PC-3 (cell line): ENCODE measurements at regions of chr14 and their contacts with region 1.

Region 1: GRCh38 chr14:58107947-58108552 is 44.0 kb downstream of the ARMH4 start:
- DNase-seq: peak; percentile 93
- ATAC-seq: 0 out of 2 replicates have a peak, but pooled peaks have one; percentile 6
- H3K4me3 ChIP-seq: no peak overlapping the region
- H3K27ac ChIP-seq: no peak overlapping the region
- H3K4me1 ChIP-seq: peaks cover 45% of the 10 kb centered on the region
- H3K27me3 ChIP-seq: peaks cover 16% of the 10 kb centered on the region; the same call in 1 of the 2 replicates
- CTCF ChIP-seq: peak; percentile 99

Region 2: DNA sequence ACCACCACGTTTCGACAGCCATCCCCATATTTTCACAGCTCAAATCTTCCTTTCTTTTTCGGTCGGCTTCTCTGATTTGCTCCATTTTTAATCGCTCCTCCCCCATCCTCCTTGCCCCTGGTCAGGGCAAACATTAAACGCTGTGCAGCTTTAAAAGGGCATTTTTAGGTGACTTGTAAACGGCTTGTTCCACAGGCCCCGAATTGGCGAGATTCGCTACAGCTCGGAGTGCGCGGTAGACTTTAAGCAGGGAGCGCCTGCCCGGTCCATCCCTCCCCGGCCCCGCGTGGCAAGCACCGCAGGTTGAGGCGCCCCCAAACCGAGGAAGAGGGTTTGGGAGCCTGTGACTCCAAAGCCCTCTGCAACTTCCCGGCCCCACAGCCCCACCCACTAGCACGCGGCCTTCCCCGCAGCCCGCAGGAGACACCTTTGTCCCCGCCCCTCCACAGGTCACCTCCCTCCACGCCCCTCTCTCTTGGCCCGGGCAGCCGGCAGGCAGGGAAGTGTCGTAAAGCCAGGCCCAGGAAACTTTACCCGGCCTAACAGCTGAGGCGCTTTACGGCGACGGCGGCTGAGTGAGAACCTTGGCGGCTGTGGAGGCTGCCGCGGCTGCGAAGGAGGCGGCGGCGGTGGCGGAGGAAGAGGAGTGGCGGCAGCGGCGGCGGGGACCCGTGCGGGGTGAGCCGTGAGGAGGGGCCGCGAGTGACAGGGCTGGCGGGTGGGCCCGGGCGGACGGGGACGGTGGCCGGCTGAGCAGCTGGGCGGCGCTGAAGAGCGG is 717.8 kb before region 1 on chr14 and contains the start of gene NAA30:
- CTCF ChIA-PET with region 1: no interaction called
- POLR2A ChIA-PET with region 1: no interaction called
- intact Hi-C with region 1: no loop called
- DNase-seq: peak; percentile 100
- ATAC-seq: peak; percentile 83
- H3K4me3 ChIP-seq: peak within 1 kb of the TSS; percentile 77
- H3K27ac ChIP-seq: peak within 1 kb of the TSS; percentile 68
- H3K4me1 ChIP-seq: peaks cover 31% of the 10 kb centered on the region
- H3K27me3 ChIP-seq: no peaks in the 10 kb centered on the region
- CTCF ChIP-seq: no peak; the same call in 1 of the 2 replicates
- total RNA-seq, gene NAA30: 23.2 and 31.2 TPM in 2 replicates

Region 3: GRCh38 chr14:57435923-57436322 is 672.1 kb before region 1 on chr14:
- CTCF ChIA-PET with region 1: no interaction called
- POLR2A ChIA-PET with region 1: no interaction called
- intact Hi-C with region 1: no loop called
- DNase-seq: no peak
- ATAC-seq: no peak
- H3K4me3 ChIP-seq: no peak overlapping the region
- H3K27ac ChIP-seq: no peak overlapping the region
- H3K4me1 ChIP-seq: no peaks in the 10 kb centered on the region
- H3K27me3 ChIP-seq: peaks cover 24% of the 10 kb centered on the region
- CTCF ChIP-seq: peak; percentile 53

Region 4: DNA sequence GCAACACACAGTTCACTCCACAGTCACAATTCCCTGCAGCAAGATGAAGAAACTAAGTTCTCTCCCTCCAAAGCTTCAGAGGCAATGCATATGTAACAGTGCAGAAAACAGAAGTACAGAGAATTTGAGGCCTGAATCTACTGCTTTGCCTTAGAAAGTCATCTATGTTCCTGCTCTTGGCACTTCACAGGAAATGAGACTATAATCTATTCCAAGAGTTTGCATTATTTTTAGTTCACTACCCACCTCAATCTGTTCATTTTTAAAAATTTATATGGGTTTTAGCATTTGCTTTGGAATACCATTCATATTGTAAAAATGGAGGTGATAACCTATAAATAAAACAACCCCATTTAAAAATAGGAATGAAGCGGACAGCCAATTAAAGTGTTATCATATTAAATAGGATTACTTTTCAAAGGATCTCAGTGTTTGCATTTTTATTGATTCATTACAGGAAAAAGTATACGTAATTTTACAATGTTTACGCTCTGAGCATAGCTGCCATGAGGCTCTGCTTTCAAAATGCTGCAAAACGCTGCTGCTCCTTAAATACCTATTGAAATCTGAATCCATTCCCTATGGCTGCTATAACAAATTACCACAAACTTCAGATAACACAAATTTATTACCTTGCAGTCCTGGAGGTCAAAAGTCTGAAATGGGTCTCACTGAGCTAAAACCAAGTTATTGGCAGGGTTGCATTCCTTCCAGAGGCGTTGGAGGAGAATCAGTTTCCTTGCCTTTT is 16.0 kb before region 1 on chr14:
- CTCF ChIA-PET with region 1: no interaction called
- POLR2A ChIA-PET with region 1: interaction called, 3 read pairs
- intact Hi-C with region 1: loop called (anchors 1 kb)
- DNase-seq: peak; percentile 92
- ATAC-seq: peak; percentile 89
- H3K4me3 ChIP-seq: no peak overlapping the region
- H3K27ac ChIP-seq: peak overlapping the region; percentile 49
- H3K4me1 ChIP-seq: peaks cover 14% of the 10 kb centered on the region
- H3K27me3 ChIP-seq: peaks cover 15% of the 10 kb centered on the region; the same call in 1 of the 2 replicates
- CTCF ChIP-seq: no peak

Region 5: DNA sequence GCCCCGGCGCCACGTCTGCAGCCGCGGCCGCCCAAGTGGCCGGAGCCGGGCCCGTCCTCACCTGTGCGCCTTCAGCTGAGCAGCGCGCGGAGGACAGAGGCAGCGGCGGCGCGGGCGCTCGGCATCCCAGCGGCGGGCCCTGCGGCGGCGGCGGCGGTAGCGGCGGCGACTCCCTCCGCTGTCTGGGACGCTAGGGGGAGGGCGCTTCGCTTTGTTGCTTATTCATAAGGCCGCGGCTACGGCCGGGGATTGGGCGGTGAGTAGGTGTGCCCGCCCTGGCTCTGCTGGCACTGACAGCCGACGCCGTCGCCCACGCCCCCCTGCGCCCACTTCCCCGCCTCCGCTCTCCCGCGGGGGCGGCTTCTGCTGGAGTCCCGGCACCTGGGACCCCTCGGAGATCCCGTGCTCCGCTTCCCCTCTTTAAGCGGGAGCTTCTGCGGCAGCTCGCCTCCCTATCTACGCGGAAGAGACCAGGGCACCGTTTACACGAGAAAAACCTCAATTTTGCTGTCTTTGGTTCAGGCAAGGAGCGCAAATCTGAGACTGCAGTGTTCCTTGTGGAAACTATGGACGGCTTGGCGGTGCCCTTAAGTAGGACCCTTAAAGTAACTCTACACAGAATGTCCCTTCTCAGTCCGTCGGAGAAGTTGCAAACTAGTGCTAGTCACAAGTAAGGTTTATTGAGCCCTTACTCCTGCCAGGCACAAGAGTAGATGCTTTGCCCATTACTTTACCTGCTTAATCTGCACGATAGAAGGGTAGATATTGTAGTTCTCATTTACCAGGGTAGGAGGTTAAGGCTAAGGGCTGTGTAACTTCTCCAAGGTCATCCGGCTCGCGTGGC is 44.2 kb after region 1 on chr14 and contains the start of gene ARMH4:
- CTCF ChIA-PET with region 1: no interaction called
- POLR2A ChIA-PET with region 1: no interaction called
- intact Hi-C with region 1: loop called (anchors 1 kb)
- DNase-seq: peak; percentile 98
- ATAC-seq: peak; percentile 95
- H3K4me3 ChIP-seq: peak within 1 kb of the TSS; percentile 73
- H3K27ac ChIP-seq: no peak within 1 kb of the TSS
- H3K4me1 ChIP-seq: peaks cover 12% of the 10 kb centered on the region
- H3K27me3 ChIP-seq: peaks cover 47% of the 10 kb centered on the region
- CTCF ChIP-seq: no peak; the same call in 1 of the 2 replicates
- total RNA-seq, gene ARMH4: 2.6 and 3.3 TPM in 2 replicates

Region 6: GRCh38 chr14:58199726-58200479 is 91.9 kb after region 1 on chr14 and contains the start of gene ACTR10:
- CTCF ChIA-PET with region 1: no interaction called
- POLR2A ChIA-PET with region 1: interaction called, 3 read pairs
- intact Hi-C with region 1: loop called (anchors 1 kb)
- DNase-seq: peak; percentile 99
- ATAC-seq: peak; percentile 94
- H3K4me3 ChIP-seq: peak within 1 kb of the TSS; percentile 88
- H3K27ac ChIP-seq: peak within 1 kb of the TSS; percentile 55
- H3K4me1 ChIP-seq: peaks cover 15% of the 10 kb centered on the region; the same call in 1 of the 2 replicates
- H3K27me3 ChIP-seq: peaks cover 10% of the 10 kb centered on the region; the same call in 1 of the 2 replicates
- CTCF ChIP-seq: no peak
- total RNA-seq, gene ACTR10: 118 and 126 TPM in 2 replicates

Region 7: DNA sequence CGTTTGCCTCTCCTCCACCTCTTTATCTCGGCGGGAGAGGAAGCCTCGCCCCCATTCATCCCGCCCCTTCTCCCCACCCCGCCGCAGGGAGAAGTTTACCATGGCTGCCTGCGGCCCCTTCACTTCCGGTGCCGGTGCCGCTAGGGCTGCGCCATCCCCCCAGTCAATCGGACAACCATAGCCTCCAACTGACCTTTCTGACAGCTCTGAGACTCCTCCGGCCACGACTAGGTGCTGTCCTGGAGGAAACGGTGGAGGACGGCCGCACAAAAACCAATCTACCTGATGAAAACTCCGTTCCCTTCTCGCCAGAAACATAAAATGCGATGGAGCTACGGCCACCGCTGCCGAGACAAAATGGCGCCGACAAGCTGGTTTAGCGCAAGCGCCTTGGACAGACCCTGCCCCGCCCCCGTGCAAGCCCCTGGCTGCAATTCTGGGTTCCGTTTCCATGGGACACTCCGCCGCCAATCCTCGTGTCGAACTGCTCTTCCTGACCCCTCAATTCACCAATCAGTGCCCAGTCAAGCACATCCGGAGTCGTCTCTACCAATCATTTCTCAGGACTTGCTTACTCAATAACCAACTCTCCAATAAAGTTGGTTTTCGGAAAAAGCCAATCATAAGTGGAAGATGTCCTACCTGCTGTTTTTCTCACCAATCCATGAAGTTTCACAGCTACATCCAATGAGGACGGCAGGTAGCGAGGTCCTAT is 189.9 kb after region 1 on chr14:
- CTCF ChIA-PET with region 1: no interaction called
- POLR2A ChIA-PET with region 1: interaction called, 8 read pairs
- intact Hi-C with region 1: loop called (anchors 1 kb)
- DNase-seq: peak; percentile 100
- ATAC-seq: peak; percentile 87
- H3K4me3 ChIP-seq: peak overlapping the region; percentile 78
- H3K27ac ChIP-seq: peak overlapping the region; percentile 78
- H3K4me1 ChIP-seq: peaks cover 18% of the 10 kb centered on the region
- H3K27me3 ChIP-seq: no peaks in the 10 kb centered on the region
- CTCF ChIP-seq: 0 out of 2 replicates have a peak, but pooled peaks have one; percentile 24

Region 8: DNA sequence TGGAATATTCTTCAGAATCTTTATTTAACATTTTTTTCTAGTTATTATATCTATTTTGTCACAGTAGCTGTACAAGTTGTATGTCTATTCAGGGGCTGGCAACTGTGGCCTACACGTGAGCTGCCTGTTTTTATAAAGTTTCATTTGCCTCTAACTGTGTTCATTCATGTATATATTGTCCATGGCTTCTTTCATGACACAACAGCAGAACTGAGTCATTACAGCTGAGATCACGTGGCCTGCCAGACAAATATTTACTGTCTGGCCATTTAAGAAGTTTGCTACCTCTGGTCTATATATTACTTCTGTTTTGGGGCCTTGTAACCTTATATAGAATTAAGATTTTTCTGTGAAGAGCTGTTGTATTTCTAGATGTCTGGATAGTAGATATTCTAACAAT is 357.4 kb after region 1 on chr14:
- CTCF ChIA-PET with region 1: no interaction called
- POLR2A ChIA-PET with region 1: no interaction called
- intact Hi-C with region 1: loop called (anchors 5 kb)
- DNase-seq: peak; percentile 91
- ATAC-seq: peak; percentile 76
- H3K4me3 ChIP-seq: no peak overlapping the region
- H3K27ac ChIP-seq: no peak overlapping the region
- H3K4me1 ChIP-seq: peaks cover 15% of the 10 kb centered on the region
- H3K27me3 ChIP-seq: no peaks in the 10 kb centered on the region
- CTCF ChIP-seq: no peak